Posterior cingulate gyrus (tissue), 11 donors: ENCODE measurements at regions of chr10 and their contacts with region 1.

Region 1: GRCh38 chr10:77846718-77847630 is 79.6 kb downstream of the DLG5 start:
- DNase-seq: peak; percentile 75 to 98 (median 89)

Region 2: GRCh38 chr10:77416311-77417135 is 430.5 kb before region 1 on chr10:
- intact Hi-C with region 1: no loop called
- DNase-seq: peak in 2 of 10 donors; percentile 30 to 53

Region 3: GRCh38 chr10:77926566-77927401 is 79.8 kb after region 1 on chr10 and contains the start of gene DLG5:
- intact Hi-C with region 1: loop called (anchors 1 kb)
- DNase-seq: peak; percentile 36 to 90 (median 56)

Region 4: GRCh38 chr10:77949167-77949566 is 102.2 kb after region 1 on chr10:
- intact Hi-C with region 1: no loop called
- DNase-seq: no peak

Region 5: GRCh38 chr10:77970869-77971803 is 124.2 kb after region 1 on chr10:
- intact Hi-C with region 1: no loop called
- DNase-seq: peak in 1 of 10 donors; percentile 9

Region 6: GRCh38 chr10:77983384-77984341 is 136.7 kb after region 1 on chr10:
- intact Hi-C with region 1: loop called (anchors 10 kb)
- DNase-seq: no peak

Region 7: GRCh38 chr10:78029269-78030226 is 182.6 kb after region 1 on chr10 and contains the start of gene POLR3A:
- intact Hi-C with region 1: loop called (anchors 2 kb)
- DNase-seq: peak; percentile 81 to 98 (median 89)

Region 8: GRCh38 chr10:78203915-78204818 is 357.2 kb after region 1 on chr10:
- intact Hi-C with region 1: no loop called
- DNase-seq: peak in 1 of 10 donors; percentile 39